ENCODE measurements at regions of chr10 and their contacts with region 1.

Region 1: GRCh38 chr10:80444646-80445319 is 9.3 kb upstream of the TSPAN14 start:
- DNase-seq: peak; percentile 45
- ATAC-seq: peak; percentile 95
- H3K4me3 ChIP-seq: no peak overlapping the region
- H3K27ac ChIP-seq: no peak overlapping the region
- H3K4me1 ChIP-seq: no peaks in the 10 kb centered on the region; the same call in 1 of the 2 replicates
- H3K27me3 ChIP-seq: no peaks in the 10 kb centered on the region
- CTCF ChIP-seq: peak; percentile 97

Region 2: GRCh38 chr10:80382989-80383388 is 61.8 kb before region 1 on chr10:
- CTCF ChIA-PET with region 1: interaction called, 6 read pairs
- POLR2A ChIA-PET with region 1: no interaction called
- in situ Hi-C with region 1: no loop called
- intact Hi-C with region 1: loop called (anchors 5 kb)
- DNase-seq: peak; percentile 15
- ATAC-seq: peak; percentile 67; the same call in 1 of the 2 replicates
- H3K4me3 ChIP-seq: no peak overlapping the region
- H3K27ac ChIP-seq: no peak overlapping the region
- H3K4me1 ChIP-seq: no peaks in the 10 kb centered on the region
- H3K27me3 ChIP-seq: peaks cover 13% of the 10 kb centered on the region; the same call in 1 of the 2 replicates
- CTCF ChIP-seq: peak; percentile 83

Region 3: GRCh38 chr10:80500572-80501380 is 56.0 kb after region 1 on chr10:
- CTCF ChIA-PET with region 1: interaction called, 40 read pairs
- POLR2A ChIA-PET with region 1: interaction called, 3 read pairs
- in situ Hi-C with region 1: no loop called
- intact Hi-C with region 1: loop called (anchors 1 kb)
- DNase-seq: no peak
- ATAC-seq: no peak
- H3K4me3 ChIP-seq: no peak overlapping the region
- H3K27ac ChIP-seq: no peak overlapping the region
- H3K4me1 ChIP-seq: peaks cover 26% of the 10 kb centered on the region
- H3K27me3 ChIP-seq: no peaks in the 10 kb centered on the region
- CTCF ChIP-seq: no peak

Region 4: GRCh38 chr10:80509403-80510161 is 64.8 kb after region 1 on chr10:
- CTCF ChIA-PET with region 1: interaction called, 40 read pairs
- POLR2A ChIA-PET with region 1: no interaction called
- in situ Hi-C with region 1: no loop called
- intact Hi-C with region 1: loop called (anchors 1 kb)
- DNase-seq: no peak
- ATAC-seq: no peak
- H3K4me3 ChIP-seq: no peak overlapping the region
- H3K27ac ChIP-seq: no peak overlapping the region
- H3K4me1 ChIP-seq: no peaks in the 10 kb centered on the region
- H3K27me3 ChIP-seq: no peaks in the 10 kb centered on the region
- CTCF ChIP-seq: no peak

Region 5: DNA sequence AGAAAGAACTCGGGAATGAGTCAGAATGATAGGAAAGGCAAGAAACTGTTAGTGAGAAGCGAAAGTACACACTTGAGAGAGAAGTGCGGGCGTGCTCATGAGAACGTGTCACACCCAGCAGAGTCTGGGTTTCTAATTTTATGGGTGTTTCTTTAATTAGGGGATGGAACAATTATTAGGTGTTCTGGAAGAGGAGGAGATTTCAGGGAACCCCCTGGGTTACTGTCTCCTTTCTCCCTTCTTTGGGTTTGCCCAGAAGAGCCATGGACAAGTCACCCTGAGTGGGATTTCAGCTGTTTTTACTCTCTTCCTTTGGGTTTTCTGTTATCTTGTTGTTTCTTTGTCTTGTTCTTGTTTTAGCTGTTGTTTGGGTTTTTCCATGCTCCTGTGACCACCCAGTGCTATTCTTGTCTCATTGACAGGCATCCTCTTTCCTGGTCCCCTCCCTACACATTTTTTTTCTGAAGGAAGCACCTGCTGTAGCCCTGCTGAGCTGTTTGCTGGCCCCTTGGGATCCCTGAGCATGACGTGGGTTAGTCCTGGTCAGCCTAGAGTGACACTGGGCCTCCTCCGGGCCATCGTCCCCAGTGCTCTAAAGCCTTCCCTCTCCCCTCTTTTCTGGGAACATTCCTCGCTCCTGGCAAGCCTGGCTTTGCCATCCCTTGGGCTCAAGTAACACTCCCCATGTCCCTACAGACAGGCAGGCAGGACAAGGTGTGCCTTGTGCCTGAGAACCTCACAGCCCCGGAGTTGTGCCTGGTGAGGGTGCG is 96.4 kb after region 1 on chr10:
- CTCF ChIA-PET with region 1: no interaction called
- POLR2A ChIA-PET with region 1: no interaction called
- in situ Hi-C with region 1: no loop called
- intact Hi-C with region 1: no loop called
- DNase-seq: no peak
- ATAC-seq: no peak
- H3K4me3 ChIP-seq: peak overlapping the region in 1 of 2 experiments; percentile 37; a peak in 2 of 4 replicates
- H3K27ac ChIP-seq: no peak overlapping the region
- H3K4me1 ChIP-seq: no peaks in the 10 kb centered on the region; the same call in 1 of the 2 replicates
- H3K27me3 ChIP-seq: peaks cover 2% of the 10 kb centered on the region; the same call in 1 of the 2 replicates
- CTCF ChIP-seq: no peak

Region 6: GRCh38 chr10:80662577-80663261 is 217.9 kb after region 1 on chr10:
- CTCF ChIA-PET with region 1: interaction called, 5 read pairs
- POLR2A ChIA-PET with region 1: no interaction called
- in situ Hi-C with region 1: no loop called
- intact Hi-C with region 1: loop called (anchors 10 kb)
- DNase-seq: peak; percentile 39
- ATAC-seq: peak; percentile 94
- H3K4me3 ChIP-seq: peak overlapping the region; percentile 24 to 52
- H3K27ac ChIP-seq: peak overlapping the region; percentile 30; the same call in 1 of the 2 replicates
- H3K4me1 ChIP-seq: 0 out of 2 replicates have a peak, but pooled peaks cover 3% of the 10 kb centered on the region
- H3K27me3 ChIP-seq: no peaks in the 10 kb centered on the region
- CTCF ChIP-seq: peak; percentile 98

Region 7: DNA sequence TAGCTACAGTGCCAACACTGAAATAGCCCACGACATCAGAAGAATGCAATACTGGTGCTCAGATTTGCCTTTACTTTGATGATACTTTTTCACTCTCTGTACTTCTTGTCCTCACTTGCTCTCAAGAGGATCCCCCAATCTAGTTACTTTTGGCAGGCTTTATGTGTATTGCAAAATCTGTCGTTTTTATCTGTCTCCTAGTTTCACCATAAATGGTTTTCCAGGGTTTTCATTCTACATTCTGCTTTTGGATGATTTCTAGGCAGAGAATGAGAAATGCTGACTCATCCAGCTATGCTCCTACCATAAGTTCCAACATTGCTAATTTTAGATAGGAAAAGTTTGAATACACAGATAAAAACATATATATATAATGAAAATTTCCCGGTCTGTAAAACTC is 770.7 kb after region 1 on chr10:
- CTCF ChIA-PET with region 1: no interaction called
- POLR2A ChIA-PET with region 1: no interaction called
- in situ Hi-C with region 1: no loop called
- intact Hi-C with region 1: no loop called
- DNase-seq: no peak
- ATAC-seq: no peak
- H3K4me3 ChIP-seq: no peak overlapping the region
- H3K27ac ChIP-seq: no peak overlapping the region
- H3K4me1 ChIP-seq: no peaks in the 10 kb centered on the region
- H3K27me3 ChIP-seq: no peaks in the 10 kb centered on the region
- CTCF ChIP-seq: no peak

Measured in Panc1 (cell line).